Caco-2 (cell line): ENCODE measurements at regions of chrX and their contacts with region 1.

Region 1: GRCh38 chrX:47093248-47093647 is 15.0 kb downstream of the RGN start:
- DNase-seq: peak in 1 of 2 experiments; percentile 14
- H3K4me3 ChIP-seq: no peak overlapping the region
- H3K4me3 Mint-ChIP-seq: no peak overlapping the region
- H3K27ac Mint-ChIP-seq: no peak overlapping the region
- H3K4me1 ChIP-seq: peaks cover 10% of the 10 kb centered on the region
- H3K4me1 Mint-ChIP-seq: no peaks in the 10 kb centered on the region
- H3K27me3 ChIP-seq: no peaks in the 10 kb centered on the region
- H3K27me3 Mint-ChIP-seq: no peaks in the 10 kb centered on the region
- CTCF ChIP-seq: peak in 1 of 2 experiments; percentile 49

Region 2: DNA sequence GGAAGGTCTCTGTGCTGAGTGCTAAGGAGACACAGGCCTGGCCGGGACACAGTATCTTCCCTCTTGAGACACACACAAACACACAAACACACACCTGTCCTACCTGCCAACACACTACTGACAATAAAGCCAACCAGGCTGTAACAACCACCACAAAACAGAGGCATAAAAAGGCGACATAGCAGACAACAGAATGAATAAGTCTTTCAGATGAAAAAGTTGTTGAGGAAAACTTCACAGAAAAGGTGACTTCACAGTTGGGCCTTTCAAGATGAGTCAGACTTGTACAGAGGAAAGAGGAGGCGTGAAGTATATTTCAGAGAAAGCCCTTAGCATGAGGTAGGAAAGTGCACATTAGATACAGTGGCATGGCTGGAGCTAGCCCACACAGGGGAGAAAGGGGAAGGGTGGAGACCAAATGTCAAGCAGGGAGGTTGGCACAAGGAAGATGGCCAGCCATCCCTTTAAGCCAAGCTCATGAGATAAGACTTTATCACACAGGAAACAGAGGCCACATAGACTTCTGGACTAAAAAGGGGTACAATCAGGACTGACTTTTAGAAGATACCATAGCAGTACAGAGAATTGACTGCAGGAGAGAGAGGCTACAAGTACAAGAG is 388.4 kb before region 1 on chrX:
- CTCF ChIA-PET with region 1: no interaction called
- POLR2A ChIA-PET with region 1: no interaction called
- intact Hi-C with region 1: no loop called
- DNase-seq: no peak
- H3K4me3 ChIP-seq: no peak overlapping the region
- H3K4me3 Mint-ChIP-seq: no peak overlapping the region
- H3K27ac Mint-ChIP-seq: no peak overlapping the region
- H3K4me1 ChIP-seq: peaks cover 3% of the 10 kb centered on the region; the same call in 1 of the 2 replicates
- H3K4me1 Mint-ChIP-seq: peaks cover 8% of the 10 kb centered on the region
- H3K27me3 ChIP-seq: no peaks in the 10 kb centered on the region
- H3K27me3 Mint-ChIP-seq: no peaks in the 10 kb centered on the region
- CTCF ChIP-seq: no peak

Region 3: GRCh38 chrX:46903458-46904242 is 189.6 kb before region 1 on chrX:
- CTCF ChIA-PET with region 1: interaction called, 12 read pairs
- POLR2A ChIA-PET with region 1: no interaction called
- intact Hi-C with region 1: loop called (anchors 1 kb)
- DNase-seq: peak; percentile 81 to 82
- H3K4me3 ChIP-seq: peak overlapping the region; percentile 39
- H3K4me3 Mint-ChIP-seq: peak overlapping the region; percentile 76
- H3K27ac Mint-ChIP-seq: no peak overlapping the region
- H3K4me1 ChIP-seq: peaks cover 4% of the 10 kb centered on the region; the same call in 1 of the 2 replicates
- H3K4me1 Mint-ChIP-seq: no peaks in the 10 kb centered on the region
- H3K27me3 ChIP-seq: no peaks in the 10 kb centered on the region
- H3K27me3 Mint-ChIP-seq: no peaks in the 10 kb centered on the region
- CTCF ChIP-seq: peak; percentile 43 to 87

Region 4: GRCh38 chrX:47030339-47030738 is 62.9 kb before region 1 on chrX:
- CTCF ChIA-PET with region 1: interaction called, 4 read pairs
- POLR2A ChIA-PET with region 1: no interaction called
- intact Hi-C with region 1: loop called (anchors 5 kb)
- DNase-seq: peak in 1 of 2 experiments; percentile 47
- H3K4me3 ChIP-seq: no peak overlapping the region
- H3K4me3 Mint-ChIP-seq: no peak overlapping the region
- H3K27ac Mint-ChIP-seq: no peak overlapping the region
- H3K4me1 ChIP-seq: no peaks in the 10 kb centered on the region
- H3K4me1 Mint-ChIP-seq: no peaks in the 10 kb centered on the region
- H3K27me3 ChIP-seq: no peaks in the 10 kb centered on the region
- H3K27me3 Mint-ChIP-seq: no peaks in the 10 kb centered on the region
- CTCF ChIP-seq: peak; percentile 38 to 42

Region 5: GRCh38 chrX:47047989-47048388 is 45.3 kb before region 1 on chrX:
- CTCF ChIA-PET with region 1: interaction called, 12 read pairs
- POLR2A ChIA-PET with region 1: no interaction called
- intact Hi-C with region 1: loop called (anchors 1 kb)
- DNase-seq: peak; percentile 74 to 82
- H3K4me3 ChIP-seq: no peak overlapping the region
- H3K4me3 Mint-ChIP-seq: peak overlapping the region; percentile 43
- H3K27ac Mint-ChIP-seq: no peak overlapping the region
- H3K4me1 ChIP-seq: peaks cover 11% of the 10 kb centered on the region
- H3K4me1 Mint-ChIP-seq: peaks cover 8% of the 10 kb centered on the region
- H3K27me3 ChIP-seq: no peaks in the 10 kb centered on the region
- H3K27me3 Mint-ChIP-seq: no peaks in the 10 kb centered on the region
- CTCF ChIP-seq: peak in 1 of 2 experiments; percentile 33